PC-3 (cell line): ENCODE measurements at regions of chr10 and their contacts with region 1.

Region 1: GRCh38 chr10:7410862-7411670 is at the start of gene SFMBT2:
- DNase-seq: peak; percentile 27
- ATAC-seq: peak; percentile 37
- H3K4me3 ChIP-seq: peak within 1 kb of the TSS; percentile 81
- H3K27ac ChIP-seq: peak within 1 kb of the TSS; percentile 32
- H3K4me1 ChIP-seq: no peaks in the 10 kb centered on the region
- H3K27me3 ChIP-seq: peaks cover 10% of the 10 kb centered on the region
- CTCF ChIP-seq: no peak
- total RNA-seq, gene SFMBT2: 1.9 and 2.1 TPM in 2 replicates

Region 2: GRCh38 chr10:6704896-6705295 is 706.2 kb before region 1 on chr10:
- CTCF ChIA-PET with region 1: interaction called, 11 read pairs
- POLR2A ChIA-PET with region 1: no interaction called
- intact Hi-C with region 1: no loop called
- DNase-seq: no peak
- ATAC-seq: no peak
- H3K4me3 ChIP-seq: no peak overlapping the region
- H3K27ac ChIP-seq: no peak overlapping the region
- H3K4me1 ChIP-seq: no peaks in the 10 kb centered on the region
- H3K27me3 ChIP-seq: peaks cover 36% of the 10 kb centered on the region
- CTCF ChIP-seq: no peak

Region 3: DNA sequence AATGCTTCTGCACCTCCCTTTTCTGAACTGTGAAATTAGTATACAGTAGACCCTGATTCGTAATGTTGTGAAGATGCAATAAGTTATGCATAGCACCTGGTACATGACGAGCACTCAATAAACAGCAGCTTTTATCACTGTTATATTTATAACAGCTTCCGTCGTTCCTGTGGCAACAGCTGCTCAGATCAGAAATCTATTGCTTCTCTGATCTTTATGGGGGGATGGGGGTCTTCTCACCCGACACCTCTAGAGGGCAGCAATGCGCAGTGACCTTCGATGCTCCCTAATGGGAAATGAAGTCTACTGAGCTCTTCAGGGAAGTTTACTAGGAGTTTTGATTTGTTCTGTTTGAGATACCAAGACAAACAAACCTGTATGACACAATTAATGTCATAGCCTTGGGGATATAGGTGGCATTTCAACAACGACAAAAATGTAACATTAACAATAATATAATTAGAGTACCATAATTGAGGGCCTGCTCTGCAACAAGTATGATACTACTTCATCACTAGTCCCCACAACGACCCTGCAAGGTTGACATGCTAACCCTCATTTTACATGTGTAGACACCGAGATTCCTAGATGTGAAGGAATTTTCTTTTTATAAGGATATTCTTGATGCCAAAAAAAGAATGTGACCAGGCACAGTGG is 289.8 kb before region 1 on chr10:
- CTCF ChIA-PET with region 1: interaction called, 6 read pairs
- POLR2A ChIA-PET with region 1: no interaction called
- intact Hi-C with region 1: loop called (anchors 2 kb)
- DNase-seq: peak; percentile 51
- ATAC-seq: peak; percentile 42
- H3K4me3 ChIP-seq: no peak overlapping the region
- H3K27ac ChIP-seq: no peak overlapping the region
- H3K4me1 ChIP-seq: no peaks in the 10 kb centered on the region
- H3K27me3 ChIP-seq: no peaks in the 10 kb centered on the region
- CTCF ChIP-seq: peak; percentile 60

Region 4: DNA sequence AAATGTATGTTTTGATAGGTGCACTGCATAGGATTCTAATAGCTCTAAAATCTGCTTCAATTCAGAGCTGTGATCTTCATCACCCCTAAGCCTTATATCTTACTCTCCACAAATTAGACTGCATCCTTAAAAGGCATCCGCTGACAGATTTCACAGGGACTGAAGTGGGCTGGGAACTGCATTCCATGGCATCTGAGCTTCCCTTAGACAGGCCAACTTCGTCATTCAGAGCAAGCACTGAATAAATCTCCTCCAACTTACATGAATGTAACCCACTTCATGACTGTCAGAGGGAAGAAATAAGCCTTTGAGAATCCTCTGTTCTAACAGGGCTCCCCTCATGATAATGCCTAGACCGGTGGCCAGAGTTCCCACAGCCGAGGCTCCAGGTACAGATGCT is 71.6 kb before region 1 on chr10:
- CTCF ChIA-PET with region 1: no interaction called
- POLR2A ChIA-PET with region 1: no interaction called
- intact Hi-C with region 1: no loop called
- DNase-seq: no peak
- ATAC-seq: no peak
- H3K4me3 ChIP-seq: no peak overlapping the region
- H3K27ac ChIP-seq: no peak overlapping the region
- H3K4me1 ChIP-seq: no peaks in the 10 kb centered on the region
- H3K27me3 ChIP-seq: 0 out of 2 replicates have a peak, but pooled peaks cover 5% of the 10 kb centered on the region
- CTCF ChIP-seq: no peak

Region 5: DNA sequence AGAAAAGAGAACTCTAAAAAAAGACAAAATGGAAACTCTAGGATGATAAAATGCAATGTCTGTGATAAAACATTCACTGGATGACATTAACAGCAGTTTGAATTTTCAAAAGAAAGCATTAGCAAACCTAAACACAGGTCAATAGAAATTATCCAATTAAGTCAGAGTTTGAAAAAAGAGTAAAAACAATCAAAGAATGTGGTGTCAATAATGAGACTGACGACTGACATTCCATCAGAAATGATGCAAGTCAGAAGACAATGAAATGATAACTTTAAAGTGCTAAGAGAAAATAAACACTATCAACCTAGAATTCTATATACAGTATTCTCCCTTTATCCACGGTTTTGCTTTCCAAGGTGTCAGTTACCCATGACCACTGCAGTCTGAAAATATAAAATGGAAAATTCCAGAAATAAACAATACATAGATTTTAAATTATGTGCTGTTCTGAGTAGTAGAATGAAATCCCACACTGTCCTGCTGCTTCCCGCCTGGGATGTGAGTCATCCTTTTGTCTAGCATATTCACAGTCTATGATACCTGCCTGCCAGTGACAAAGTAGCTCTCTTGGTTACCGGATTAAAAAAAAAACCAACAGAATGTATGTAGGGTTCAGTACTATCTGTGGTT is 38.1 kb after region 1 on chr10:
- CTCF ChIA-PET with region 1: no interaction called
- POLR2A ChIA-PET with region 1: interaction called, 10 read pairs
- intact Hi-C with region 1: no loop called
- DNase-seq: no peak
- ATAC-seq: no peak
- H3K4me3 ChIP-seq: no peak overlapping the region
- H3K27ac ChIP-seq: no peak overlapping the region
- H3K4me1 ChIP-seq: no peaks in the 10 kb centered on the region
- H3K27me3 ChIP-seq: peaks cover 19% of the 10 kb centered on the region; the same call in 1 of the 2 replicates
- CTCF ChIP-seq: no peak